Activated CD4-positive, alpha-beta T cell treated with anti-CD3 and anti-CD28 coated beads for 36 hours (primary cell): ENCODE measurements at regions of chr21 and their contacts with region 1.

Region 1: DNA sequence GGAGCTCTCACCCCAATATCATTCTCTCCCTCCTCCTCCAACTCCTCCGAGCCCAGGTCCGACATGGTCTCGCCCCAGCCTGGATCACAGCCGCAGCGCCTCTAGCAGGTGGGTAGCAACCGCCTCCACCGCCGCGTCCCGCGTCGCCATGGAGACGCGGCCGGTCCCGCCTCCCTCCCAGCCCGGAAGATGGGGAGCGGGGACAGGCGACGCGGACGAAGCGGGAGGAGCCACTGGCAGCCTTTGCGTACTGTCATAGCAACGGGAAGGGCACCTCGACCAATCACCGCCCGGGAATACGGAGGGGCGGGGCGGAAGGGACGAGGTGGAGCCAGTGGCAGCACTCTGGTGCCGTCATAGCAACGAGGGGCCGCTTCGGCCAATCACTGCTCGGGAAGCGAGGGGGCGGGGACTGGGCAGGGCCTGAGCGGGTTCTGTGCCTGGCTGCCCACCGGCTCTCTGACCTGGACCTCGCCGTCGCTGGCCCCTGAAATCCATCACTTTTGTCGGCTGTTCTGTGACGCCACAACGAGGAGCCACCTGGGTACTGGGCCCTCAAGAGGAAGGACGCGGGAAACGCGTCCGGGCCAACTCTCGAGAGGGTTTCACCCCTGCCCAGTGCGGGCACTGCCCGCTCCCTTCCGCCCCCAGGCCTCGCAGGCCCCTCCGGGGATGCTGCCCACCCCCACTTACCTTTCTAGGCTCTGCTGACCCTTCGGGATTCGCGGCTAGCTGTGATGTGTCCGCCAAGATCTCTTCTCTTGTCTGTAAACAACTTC is at the start of gene RSPH1:
- DNase-seq: peak; percentile 100
- ATAC-seq: peak; percentile 99
- H3K4me3 Mint-ChIP-seq: peak within 1 kb of the TSS; percentile 75
- H3K27ac Mint-ChIP-seq: peak within 1 kb of the TSS; percentile 69
- H3K4me1 Mint-ChIP-seq: peaks cover 25% of the 10 kb centered on the region
- H3K27me3 Mint-ChIP-seq: peaks cover 2% of the 10 kb centered on the region
- total RNA-seq, gene RSPH1: 0.21 to 0.34 TPM

Region 2: DNA sequence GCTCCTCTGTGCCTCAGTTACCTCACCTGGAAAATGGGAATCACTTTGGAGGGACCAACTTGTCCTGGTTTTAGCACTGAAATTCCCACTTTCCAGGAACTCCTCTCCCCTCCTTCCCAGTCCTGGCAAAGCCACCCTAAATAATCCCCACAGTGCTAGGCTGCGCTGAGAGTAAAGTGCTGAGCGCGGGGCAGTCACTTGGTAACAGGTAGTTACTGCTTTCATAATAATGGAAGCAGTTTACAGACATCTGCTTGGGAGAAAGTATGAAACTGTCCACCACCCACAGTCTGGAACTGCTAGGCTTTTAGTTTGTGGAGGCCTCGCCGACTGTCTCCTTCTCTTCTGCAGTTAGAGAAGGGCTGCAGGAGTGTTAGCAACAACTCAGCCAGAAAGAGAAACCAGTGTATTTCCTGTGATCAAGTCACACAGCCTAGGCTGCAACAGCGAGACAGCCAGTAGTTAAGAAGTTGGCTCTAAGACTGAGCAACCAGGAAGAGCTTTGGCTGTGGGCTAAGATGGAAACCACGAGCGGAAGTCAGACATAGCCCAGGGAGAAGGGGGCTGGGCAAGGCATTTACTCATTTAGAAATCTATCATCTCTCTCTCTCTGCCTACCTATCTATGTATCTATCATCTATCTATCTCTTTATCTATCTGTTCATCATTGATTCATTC is 308.2 kb before region 1 on chr21:
- CTCF ChIA-PET with region 1: no interaction called
- POLR2A ChIA-PET with region 1: no interaction called
- intact Hi-C with region 1: loop called in 1 of 2 experiments (anchors 1 kb)
- DNase-seq: peak; percentile 88
- ATAC-seq: peak; percentile 93
- H3K4me3 Mint-ChIP-seq: peak overlapping the region; percentile 57
- H3K27ac Mint-ChIP-seq: peak overlapping the region; percentile 95
- H3K4me1 Mint-ChIP-seq: peaks cover 65% of the 10 kb centered on the region
- H3K27me3 Mint-ChIP-seq: peaks cover 2% of the 10 kb centered on the region

Region 3: GRCh38 chr21:42456457-42456856 is 39.9 kb before region 1 on chr21:
- CTCF ChIA-PET with region 1: interaction called, 7 read pairs
- POLR2A ChIA-PET with region 1: no interaction called
- intact Hi-C with region 1: loop called (anchors 1 to 5 kb)
- DNase-seq: peak; percentile 76
- ATAC-seq: peak; percentile 97
- H3K4me3 Mint-ChIP-seq: no peak overlapping the region
- H3K27ac Mint-ChIP-seq: peak overlapping the region; percentile 91
- H3K4me1 Mint-ChIP-seq: peaks cover 46% of the 10 kb centered on the region
- H3K27me3 Mint-ChIP-seq: no peaks in the 10 kb centered on the region

Region 4: DNA sequence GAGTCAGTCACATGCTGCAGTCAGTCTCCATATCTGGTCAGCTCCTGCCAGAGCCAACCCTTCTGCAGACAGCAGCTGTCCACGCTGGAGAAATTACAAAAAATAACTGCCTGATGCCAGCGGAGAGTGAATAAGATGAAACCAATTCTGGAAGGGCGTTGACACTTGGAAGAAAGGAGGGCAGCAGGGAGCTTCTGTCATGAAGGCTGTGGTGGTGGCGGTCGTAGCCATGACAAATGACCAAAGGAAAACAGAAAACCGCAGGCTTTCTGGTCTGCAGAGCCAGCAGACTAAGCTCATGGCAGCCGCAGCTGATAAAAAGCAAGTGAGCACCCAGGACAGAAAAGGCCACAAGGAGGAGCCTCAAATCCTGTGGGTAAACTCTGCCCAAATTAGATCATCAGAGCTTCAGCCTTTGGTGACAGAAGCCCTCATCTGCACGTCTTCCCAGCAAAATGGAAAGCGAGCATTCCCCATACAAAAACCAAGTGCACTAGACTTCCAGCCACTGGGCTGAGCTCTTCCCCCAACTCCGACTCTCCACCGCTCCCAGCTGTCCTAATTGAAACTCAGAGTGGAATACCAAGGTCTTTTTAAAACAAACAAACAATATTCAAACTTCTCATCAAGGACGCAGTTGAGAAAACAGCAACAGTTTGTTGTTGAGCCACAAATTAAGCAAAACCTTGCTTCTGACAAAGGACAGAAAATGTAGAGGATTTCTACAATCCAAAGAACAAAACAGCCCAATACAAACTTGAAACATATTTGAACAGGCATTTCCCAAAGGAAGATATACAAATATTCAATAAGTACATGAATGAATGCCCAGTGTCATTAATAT is 28.9 kb before region 1 on chr21:
- CTCF ChIA-PET with region 1: no interaction called
- POLR2A ChIA-PET with region 1: no interaction called
- intact Hi-C with region 1: loop called (anchors 1 to 5 kb)
- DNase-seq: peak; percentile 43
- ATAC-seq: no peak
- H3K4me3 Mint-ChIP-seq: no peak overlapping the region
- H3K27ac Mint-ChIP-seq: no peak overlapping the region
- H3K4me1 Mint-ChIP-seq: peaks cover 34% of the 10 kb centered on the region
- H3K27me3 Mint-ChIP-seq: no peaks in the 10 kb centered on the region

Region 5: GRCh38 chr21:42513985-42514882 is 17.9 kb after region 1 on chr21:
- CTCF ChIA-PET with region 1: no interaction called
- POLR2A ChIA-PET with region 1: no interaction called
- intact Hi-C with region 1: loop called in 1 of 2 experiments (anchors 1 kb)
- DNase-seq: peak; percentile 81
- ATAC-seq: peak; percentile 78
- H3K4me3 Mint-ChIP-seq: peak overlapping the region; percentile 81
- H3K27ac Mint-ChIP-seq: peak overlapping the region; percentile 82
- H3K4me1 Mint-ChIP-seq: peaks cover 13% of the 10 kb centered on the region
- H3K27me3 Mint-ChIP-seq: no peaks in the 10 kb centered on the region

Region 6: GRCh38 chr21:42878993-42879787 is 382.9 kb after region 1 on chr21 and contains the start of gene WDR4:
- CTCF ChIA-PET with region 1: no interaction called
- POLR2A ChIA-PET with region 1: no interaction called
- intact Hi-C with region 1: loop called in 1 of 2 experiments (anchors 1 kb)
- DNase-seq: peak; percentile 99
- ATAC-seq: peak; percentile 93
- H3K4me3 Mint-ChIP-seq: peak within 1 kb of the TSS; percentile 92
- H3K27ac Mint-ChIP-seq: peak within 1 kb of the TSS; percentile 99
- H3K4me1 Mint-ChIP-seq: peaks cover 17% of the 10 kb centered on the region
- H3K27me3 Mint-ChIP-seq: no peaks in the 10 kb centered on the region
- total RNA-seq, gene WDR4: 34.0 to 46.5 TPM

Region 7: DNA sequence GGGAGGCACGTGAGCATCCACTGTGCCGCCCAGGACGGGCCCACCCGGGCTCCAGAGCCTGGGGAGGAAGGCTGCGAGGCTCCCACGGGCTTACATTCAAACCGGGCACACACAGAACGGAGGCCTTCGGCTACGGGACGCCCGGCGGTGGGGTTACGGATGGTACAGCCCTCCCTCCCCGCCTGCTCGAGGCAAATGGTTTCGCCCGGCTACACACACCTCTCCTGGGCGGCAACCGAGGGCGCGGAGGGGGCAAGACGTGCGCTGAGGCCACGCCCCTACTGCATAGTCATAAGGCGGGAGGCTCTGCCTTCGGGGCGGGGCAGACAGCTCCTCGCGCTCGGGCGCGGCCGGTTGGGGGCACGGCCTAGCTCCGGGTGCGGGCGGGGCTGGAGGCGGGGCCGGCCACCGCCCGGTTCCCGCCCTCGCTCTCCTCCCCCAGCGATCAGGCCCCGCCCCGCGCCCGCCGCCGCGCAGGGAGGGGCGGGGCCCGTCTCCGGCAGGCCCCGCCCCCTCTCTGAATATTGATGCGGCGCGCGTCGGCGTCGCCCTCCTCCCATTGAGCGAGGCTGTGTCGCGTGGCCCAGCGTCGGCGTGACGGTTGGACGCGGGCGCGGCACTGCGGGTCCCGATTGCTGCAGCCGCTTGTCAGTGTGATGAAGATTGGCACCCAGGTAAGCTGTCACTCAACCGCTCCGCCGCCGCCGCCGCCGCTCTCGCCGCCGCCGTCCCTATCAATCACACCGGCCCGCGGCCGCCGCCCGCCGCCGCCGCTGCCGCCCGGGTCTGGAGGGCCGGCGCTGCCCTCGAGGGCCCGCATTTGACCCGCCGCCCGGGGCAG is 477.9 kb after region 1 on chr21 and contains the start of gene PKNOX1:
- CTCF ChIA-PET with region 1: no interaction called
- POLR2A ChIA-PET with region 1: no interaction called
- intact Hi-C with region 1: loop called in 1 of 2 experiments (anchors 1 kb)
- DNase-seq: peak; percentile 100
- ATAC-seq: peak; percentile 89
- H3K4me3 Mint-ChIP-seq: peak within 1 kb of the TSS; percentile 85
- H3K27ac Mint-ChIP-seq: peak within 1 kb of the TSS; percentile 94
- H3K4me1 Mint-ChIP-seq: peaks cover 30% of the 10 kb centered on the region
- H3K27me3 Mint-ChIP-seq: no peaks in the 10 kb centered on the region
- total RNA-seq, gene PKNOX1: 13.4 to 14.8 TPM